ENCODE measurements at regions of chr17 and their contacts with region 1.

Region 1: DNA sequence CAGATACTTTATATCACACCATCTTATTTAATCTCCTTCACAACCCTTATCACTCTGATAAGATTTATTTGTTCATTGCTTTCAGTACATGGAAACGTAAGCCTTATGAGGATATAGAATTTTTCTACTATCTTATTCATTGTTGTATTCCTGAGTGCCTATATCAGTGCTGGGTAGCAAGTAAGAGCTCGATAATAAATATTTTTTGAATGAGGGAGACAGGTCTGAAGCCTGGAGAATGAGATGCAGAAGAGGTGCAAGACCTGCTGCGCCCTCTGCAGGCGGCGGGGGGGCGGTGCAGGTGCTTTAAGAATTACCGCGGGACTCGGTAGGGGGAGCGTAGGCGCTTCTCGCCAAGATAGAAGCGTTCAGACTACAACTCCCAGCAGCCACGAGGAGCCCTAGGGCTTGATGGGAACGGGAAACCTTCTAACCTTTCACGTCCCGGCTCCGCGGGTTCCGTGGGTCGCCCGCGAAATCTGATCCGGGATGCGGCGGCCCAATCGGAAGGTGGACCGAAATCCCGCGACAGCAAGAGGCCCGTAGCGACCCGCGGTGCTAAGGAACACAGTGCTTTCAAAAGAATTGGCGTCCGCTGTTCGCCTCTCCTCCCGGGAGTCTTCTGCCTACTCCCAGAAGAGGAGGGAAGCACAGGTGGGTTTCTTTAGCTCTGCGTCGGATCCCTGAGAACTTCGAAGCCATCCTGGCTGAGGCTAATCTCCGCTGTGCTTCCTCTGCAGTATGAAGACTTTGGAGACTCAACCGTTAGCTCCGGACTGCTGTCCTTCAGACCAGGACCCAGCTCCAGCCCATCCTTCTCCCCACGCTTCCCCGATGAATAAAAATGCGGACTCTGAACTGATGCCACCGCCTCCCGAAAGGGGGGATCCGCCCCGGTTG is at the start of gene WRAP53:
- DNase-seq: peak; percentile 97
- ATAC-seq: peak; percentile 81
- H3K4me3 Mint-ChIP-seq: peak within 1 kb of the TSS; percentile 83
- H3K27ac Mint-ChIP-seq: peak within 1 kb of the TSS; percentile 97
- H3K4me1 Mint-ChIP-seq: peaks cover 35% of the 10 kb centered on the region
- H3K27me3 Mint-ChIP-seq: no peaks in the 10 kb centered on the region
- total RNA-seq, gene WRAP53: 23.5 to 27.1 TPM

Region 2: DNA sequence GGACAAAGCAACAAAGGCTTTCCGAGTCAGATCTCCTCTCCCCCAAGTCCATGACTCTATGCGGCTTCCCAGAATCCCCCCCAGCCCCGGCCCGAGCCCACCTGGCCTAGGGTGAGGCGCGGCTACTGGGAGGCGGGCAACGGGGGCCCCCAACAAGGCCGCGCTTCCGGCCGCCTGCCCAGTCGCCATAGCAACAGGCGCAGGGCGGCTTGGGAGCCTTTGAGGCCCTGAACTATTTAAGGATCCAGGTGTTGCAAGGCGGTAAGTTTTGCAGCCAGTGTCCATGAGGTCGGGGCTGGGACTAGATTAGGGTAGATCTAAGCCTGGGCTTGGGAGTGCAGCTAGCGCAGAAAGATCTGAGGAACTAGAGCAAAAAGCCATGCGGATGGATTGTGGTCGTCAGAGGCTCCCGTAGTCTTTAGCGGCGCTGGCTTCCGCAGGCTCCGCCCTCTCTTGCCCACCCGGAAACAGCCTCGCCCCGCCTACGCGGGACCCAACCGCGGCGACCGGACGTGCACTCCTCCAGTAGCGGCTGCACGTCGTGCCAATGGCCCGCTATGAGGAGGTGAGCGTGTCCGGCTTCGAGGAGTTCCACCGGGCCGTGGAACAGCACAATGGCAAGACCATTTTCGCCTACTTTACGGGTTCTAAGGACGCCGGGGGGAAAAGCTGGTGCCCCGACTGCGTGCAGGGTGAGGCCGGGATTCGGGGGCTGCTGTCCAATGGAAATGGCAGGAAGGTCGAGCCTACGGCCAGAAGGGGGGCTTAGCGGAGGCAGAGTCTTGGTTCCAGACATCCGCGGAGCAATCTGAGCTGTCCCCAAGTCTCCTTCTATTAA is 1047.4 kb before region 1 on chr17 and contains the starts of genes KIAA0753 and TXNDC17:
- CTCF ChIA-PET with region 1: no interaction called
- POLR2A ChIA-PET with region 1: no interaction called
- intact Hi-C with region 1: loop called in 1 of 2 experiments (anchors 5 kb)
- DNase-seq: peak; percentile 96
- ATAC-seq: peak; percentile 81
- H3K4me3 Mint-ChIP-seq: peak within 1 kb of the TSS; percentile 92
- H3K27ac Mint-ChIP-seq: peak within 1 kb of the TSS; percentile 92
- H3K4me1 Mint-ChIP-seq: peaks cover 59% of the 10 kb centered on the region
- H3K27me3 Mint-ChIP-seq: no peaks in the 10 kb centered on the region
- total RNA-seq, gene KIAA0753: 17.1 to 24.9 TPM
- total RNA-seq, gene TXNDC17: 52.4 to 122 TPM

Region 3: GRCh38 chr17:7306911-7307686 is 381.1 kb before region 1 on chr17 and contains the start of gene EIF5A:
- CTCF ChIA-PET with region 1: no interaction called
- POLR2A ChIA-PET with region 1: interaction called, 3 read pairs
- intact Hi-C with region 1: loop called (anchors 1 to 2 kb)
- DNase-seq: peak; percentile 100
- ATAC-seq: peak; percentile 86
- H3K4me3 Mint-ChIP-seq: peak within 1 kb of the TSS; percentile 96
- H3K27ac Mint-ChIP-seq: peak within 1 kb of the TSS; percentile 100
- H3K4me1 Mint-ChIP-seq: peaks cover 36% of the 10 kb centered on the region
- H3K27me3 Mint-ChIP-seq: no peaks in the 10 kb centered on the region
- total RNA-seq, gene EIF5A: 780 to 934 TPM

Region 4: GRCh38 chr17:7484067-7484918 is 203.9 kb before region 1 on chr17 and contains the start of gene POLR2A:
- CTCF ChIA-PET with region 1: interaction called, 3 read pairs
- POLR2A ChIA-PET with region 1: no interaction called
- intact Hi-C with region 1: loop called (anchors 1 kb)
- DNase-seq: peak; percentile 98
- ATAC-seq: peak; percentile 71
- H3K4me3 Mint-ChIP-seq: peak within 1 kb of the TSS; percentile 99
- H3K27ac Mint-ChIP-seq: peak within 1 kb of the TSS; percentile 100
- H3K4me1 Mint-ChIP-seq: peaks cover 71% of the 10 kb centered on the region
- H3K27me3 Mint-ChIP-seq: no peaks in the 10 kb centered on the region
- total RNA-seq, gene POLR2A: 193 to 203 TPM

Region 5: GRCh38 chr17:7614422-7615264 is 73.5 kb before region 1 on chr17 and contains the start of gene FXR2:
- CTCF ChIA-PET with region 1: interaction called, 31 read pairs
- POLR2A ChIA-PET with region 1: interaction called, 32 read pairs
- intact Hi-C with region 1: loop called (anchors 1 to 2 kb)
- DNase-seq: peak; percentile 100
- ATAC-seq: peak; percentile 95
- H3K4me3 Mint-ChIP-seq: peak within 1 kb of the TSS; percentile 85
- H3K27ac Mint-ChIP-seq: peak within 1 kb of the TSS; percentile 93
- H3K4me1 Mint-ChIP-seq: peaks cover 32% of the 10 kb centered on the region
- H3K27me3 Mint-ChIP-seq: no peaks in the 10 kb centered on the region
- total RNA-seq, gene FXR2: 35.6 to 50.2 TPM

Region 6: DNA sequence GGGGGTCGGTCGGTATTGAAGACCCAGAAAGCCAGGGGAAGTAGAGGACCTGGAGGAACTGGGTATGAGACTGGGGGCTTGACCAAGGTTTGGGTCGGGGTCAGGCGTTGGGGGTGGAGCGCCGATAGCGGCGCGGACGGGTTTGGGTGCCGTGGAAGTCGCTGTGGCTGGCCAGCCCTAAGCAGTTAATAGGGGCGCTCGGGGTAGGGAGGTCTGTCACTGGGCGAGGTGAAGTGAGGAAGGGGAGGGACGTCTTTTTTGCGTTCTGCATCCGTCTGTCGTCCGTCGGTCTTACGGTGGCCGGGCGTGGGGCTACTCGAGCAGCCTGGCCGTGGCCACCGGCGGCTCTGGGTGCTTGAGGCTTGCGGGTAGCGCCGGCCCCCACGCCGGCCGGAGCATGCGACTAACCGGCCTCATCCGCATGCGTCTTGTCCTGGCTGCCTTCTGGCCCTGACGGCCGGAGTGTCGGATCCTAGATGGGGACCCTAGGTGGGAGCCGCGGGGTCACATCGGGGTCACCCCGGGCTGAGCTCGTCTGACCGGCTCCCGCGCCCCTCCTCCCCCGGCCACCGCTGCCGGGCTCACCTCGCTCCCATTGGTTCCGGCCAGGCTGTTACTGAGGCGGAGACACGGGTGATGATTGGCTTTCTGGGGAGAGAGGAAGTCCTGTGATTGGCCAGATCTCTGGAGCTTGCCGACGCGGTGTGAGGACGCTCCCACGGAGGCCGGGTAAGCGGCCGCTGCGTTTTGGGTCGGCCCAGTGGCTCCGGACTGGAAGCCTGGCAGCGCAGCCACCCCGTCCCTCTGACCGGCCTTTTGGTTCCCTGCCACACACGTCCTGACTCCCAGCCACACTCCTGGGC is 156.4 kb after region 1 on chr17:
- CTCF ChIA-PET with region 1: no interaction called
- POLR2A ChIA-PET with region 1: interaction called, 6 read pairs
- intact Hi-C with region 1: loop called (anchors 1 to 5 kb)
- DNase-seq: peak; percentile 92
- ATAC-seq: peak; percentile 51
- H3K4me3 Mint-ChIP-seq: peak overlapping the region; percentile 97
- H3K27ac Mint-ChIP-seq: peak overlapping the region; percentile 96
- H3K4me1 Mint-ChIP-seq: peaks cover 40% of the 10 kb centered on the region
- H3K27me3 Mint-ChIP-seq: no peaks in the 10 kb centered on the region

Region 7: DNA sequence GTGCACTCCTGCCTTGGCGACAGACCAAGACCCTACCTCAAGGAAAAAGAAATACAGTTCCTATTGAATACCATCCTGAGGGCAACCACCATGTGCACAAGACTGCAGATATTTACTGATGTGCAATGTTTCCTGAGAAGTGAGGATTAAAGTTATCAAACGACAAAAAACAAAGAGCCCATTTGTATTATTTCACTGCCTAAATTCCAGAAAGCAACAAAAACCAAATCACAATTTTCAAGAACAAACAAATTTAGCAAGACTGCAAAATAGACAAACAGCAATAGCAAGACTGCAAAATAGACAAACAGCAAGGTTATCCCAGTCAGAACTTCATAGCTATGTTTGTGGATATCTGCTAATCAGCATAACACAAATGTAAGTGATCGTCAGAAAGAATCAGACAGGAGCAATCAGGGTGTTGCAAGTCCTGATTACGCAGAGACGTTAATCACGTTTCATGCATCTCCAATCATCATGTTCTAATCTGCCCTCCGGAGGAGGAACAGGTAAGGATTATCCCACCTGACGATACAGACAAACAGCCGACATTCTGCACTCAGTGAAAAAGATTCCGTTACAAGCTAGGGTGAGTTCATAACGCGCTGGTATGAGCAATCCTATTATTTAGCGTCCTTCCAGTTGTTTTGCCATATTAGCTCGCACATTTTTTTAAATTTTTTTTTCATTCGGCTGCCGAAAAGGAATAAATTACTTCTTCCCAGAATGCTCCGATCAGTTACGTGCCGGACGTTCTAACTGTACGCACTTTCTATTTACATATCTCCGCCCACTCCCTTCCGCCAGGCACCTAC is 485.1 kb after region 1 on chr17:
- CTCF ChIA-PET with region 1: interaction called, 3 read pairs
- POLR2A ChIA-PET with region 1: interaction called, 4 read pairs
- intact Hi-C with region 1: loop called in 1 of 2 experiments (anchors 5 kb)
- DNase-seq: peak; percentile 91
- ATAC-seq: peak; percentile 87
- H3K4me3 Mint-ChIP-seq: peak overlapping the region; percentile 78
- H3K27ac Mint-ChIP-seq: peak overlapping the region; percentile 96
- H3K4me1 Mint-ChIP-seq: peaks cover 40% of the 10 kb centered on the region
- H3K27me3 Mint-ChIP-seq: no peaks in the 10 kb centered on the region